ENCODE measurements at regions of chr13 and their contacts with region 1.

Region 1: GRCh38 chr13:32586080-32586900 is at the start of gene PDS5B:
- DNase-seq: peak; percentile 95
- ATAC-seq: peak; percentile 95
- H3K4me3 Mint-ChIP-seq: peak within 1 kb of the TSS; percentile 92
- H3K27ac Mint-ChIP-seq: peak within 1 kb of the TSS; percentile 91
- H3K4me1 Mint-ChIP-seq: peaks cover 35% of the 10 kb centered on the region
- H3K27me3 Mint-ChIP-seq: peaks cover 6% of the 10 kb centered on the region
- total RNA-seq, gene PDS5B: 62.5 to 72.3 TPM

Region 2: DNA sequence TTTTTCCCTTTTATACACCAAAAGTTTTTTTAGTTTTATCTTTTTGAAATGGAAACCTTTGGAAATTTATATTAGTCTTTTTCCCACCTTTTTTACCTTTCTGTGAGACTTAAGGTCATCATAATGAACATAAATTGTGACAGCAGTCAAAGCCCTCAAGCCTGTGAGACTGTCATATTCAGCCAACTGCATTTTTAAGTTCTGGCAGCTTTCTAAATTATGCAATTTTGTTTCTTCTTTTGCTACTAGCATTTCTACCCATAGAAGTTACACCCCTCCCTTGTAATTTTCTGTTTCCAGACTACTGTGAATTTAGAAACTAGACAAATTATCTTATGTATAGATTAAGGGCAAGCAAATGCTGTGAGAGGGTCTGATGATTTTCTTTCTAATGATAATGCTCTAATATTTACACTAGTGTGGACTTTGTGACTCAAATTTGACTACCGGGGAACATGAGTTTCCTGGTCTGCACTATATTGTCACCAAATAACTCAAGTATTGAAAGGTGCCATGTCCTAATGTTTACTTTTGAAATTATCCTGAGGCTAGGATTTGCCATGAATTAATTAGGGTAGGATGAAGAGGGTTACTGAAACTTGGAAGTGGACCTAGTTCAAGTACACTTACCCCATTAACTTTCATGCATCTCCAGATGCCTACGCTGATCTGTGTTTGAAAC is 511.0 kb before region 1 on chr13:
- CTCF ChIA-PET with region 1: no interaction called
- POLR2A ChIA-PET with region 1: no interaction called
- DNase-seq: no peak
- ATAC-seq: no peak
- H3K4me3 Mint-ChIP-seq: no peak overlapping the region
- H3K27ac Mint-ChIP-seq: no peak overlapping the region
- H3K4me1 Mint-ChIP-seq: no peaks in the 10 kb centered on the region
- H3K27me3 Mint-ChIP-seq: no peaks in the 10 kb centered on the region

Region 3: GRCh38 chr13:32632343-32632909 is 46.1 kb after region 1 on chr13:
- CTCF ChIA-PET with region 1: interaction called, 17 read pairs
- POLR2A ChIA-PET with region 1: interaction called, 3 read pairs
- DNase-seq: no peak
- ATAC-seq: no peak
- H3K4me3 Mint-ChIP-seq: no peak overlapping the region
- H3K27ac Mint-ChIP-seq: no peak overlapping the region
- H3K4me1 Mint-ChIP-seq: peaks cover 17% of the 10 kb centered on the region
- H3K27me3 Mint-ChIP-seq: no peaks in the 10 kb centered on the region

Region 4: DNA sequence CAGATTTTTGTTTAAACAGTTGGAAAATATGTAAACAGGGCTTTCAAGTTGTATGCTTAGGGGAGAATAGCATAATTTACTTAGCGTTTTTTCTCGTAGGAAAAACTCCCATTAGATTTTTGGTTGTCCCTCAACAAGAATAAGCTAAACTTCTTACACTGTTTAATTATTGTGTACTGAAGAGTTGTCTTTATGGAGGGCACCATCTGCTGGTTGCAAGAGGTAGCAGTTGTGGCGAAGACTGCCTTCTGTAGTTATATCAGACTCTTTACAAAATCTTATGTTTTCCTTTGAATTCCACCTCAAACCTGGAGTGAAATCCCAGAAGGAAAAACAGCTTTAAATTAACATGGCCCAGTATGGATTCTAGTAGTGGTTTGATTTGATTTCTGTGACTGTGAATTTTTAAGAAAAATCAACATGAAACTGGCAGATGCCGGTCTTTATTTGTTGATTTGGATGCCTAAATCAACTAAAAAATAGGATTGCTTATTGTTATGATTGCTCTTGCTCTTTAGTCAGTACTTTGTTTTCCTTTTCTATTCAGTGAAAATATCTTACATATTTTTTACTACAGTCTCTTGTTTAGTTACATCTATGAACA is 53.3 kb after region 1 on chr13:
- CTCF ChIA-PET with region 1: interaction called, 54 read pairs
- POLR2A ChIA-PET with region 1: interaction called, 7 read pairs
- DNase-seq: peak; percentile 68
- ATAC-seq: peak; percentile 67
- H3K4me3 Mint-ChIP-seq: no peak overlapping the region
- H3K27ac Mint-ChIP-seq: no peak overlapping the region
- H3K4me1 Mint-ChIP-seq: peaks cover 27% of the 10 kb centered on the region
- H3K27me3 Mint-ChIP-seq: no peaks in the 10 kb centered on the region

Region 5: GRCh38 chr13:32650705-32651311 is 64.5 kb after region 1 on chr13:
- CTCF ChIA-PET with region 1: interaction called, 65 read pairs
- POLR2A ChIA-PET with region 1: interaction called, 5 read pairs
- DNase-seq: peak; percentile 72
- ATAC-seq: peak; percentile 80
- H3K4me3 Mint-ChIP-seq: no peak overlapping the region
- H3K27ac Mint-ChIP-seq: no peak overlapping the region
- H3K4me1 Mint-ChIP-seq: peaks cover 24% of the 10 kb centered on the region
- H3K27me3 Mint-ChIP-seq: no peaks in the 10 kb centered on the region

Region 6: DNA sequence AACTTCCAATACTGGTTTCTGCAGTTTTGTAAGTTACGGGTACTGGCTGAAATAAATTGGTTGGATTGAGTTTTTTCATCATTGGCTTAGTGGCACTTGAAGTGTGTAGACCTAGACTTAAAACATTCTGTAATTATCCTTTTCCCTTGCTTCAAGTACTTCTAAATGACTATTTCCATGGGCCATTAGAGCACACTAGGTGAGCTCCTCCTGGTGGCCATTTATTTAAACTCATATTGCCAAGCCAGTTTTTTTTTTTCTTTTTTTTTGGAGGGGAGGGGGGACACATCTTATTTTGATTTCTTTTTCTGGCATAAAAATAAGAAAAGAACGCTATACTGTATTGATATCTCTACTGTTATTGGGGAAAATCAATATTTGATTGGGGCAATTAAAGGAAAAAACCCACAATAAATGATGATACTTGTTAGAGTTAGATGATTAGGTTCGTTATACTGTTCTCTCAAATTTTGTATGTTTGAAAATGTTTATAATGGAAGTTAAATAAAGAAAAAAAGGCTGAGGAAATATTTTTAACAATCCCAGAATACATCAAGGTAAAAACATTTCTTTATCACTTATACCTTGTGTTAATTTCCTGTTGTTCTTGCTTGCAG is 82.8 kb after region 1 on chr13:
- CTCF ChIA-PET with region 1: interaction called, 28 read pairs
- POLR2A ChIA-PET with region 1: no interaction called
- DNase-seq: peak; percentile 26
- ATAC-seq: peak; percentile 44
- H3K4me3 Mint-ChIP-seq: no peak overlapping the region
- H3K27ac Mint-ChIP-seq: no peak overlapping the region
- H3K4me1 Mint-ChIP-seq: no peaks in the 10 kb centered on the region
- H3K27me3 Mint-ChIP-seq: no peaks in the 10 kb centered on the region

Region 7: DNA sequence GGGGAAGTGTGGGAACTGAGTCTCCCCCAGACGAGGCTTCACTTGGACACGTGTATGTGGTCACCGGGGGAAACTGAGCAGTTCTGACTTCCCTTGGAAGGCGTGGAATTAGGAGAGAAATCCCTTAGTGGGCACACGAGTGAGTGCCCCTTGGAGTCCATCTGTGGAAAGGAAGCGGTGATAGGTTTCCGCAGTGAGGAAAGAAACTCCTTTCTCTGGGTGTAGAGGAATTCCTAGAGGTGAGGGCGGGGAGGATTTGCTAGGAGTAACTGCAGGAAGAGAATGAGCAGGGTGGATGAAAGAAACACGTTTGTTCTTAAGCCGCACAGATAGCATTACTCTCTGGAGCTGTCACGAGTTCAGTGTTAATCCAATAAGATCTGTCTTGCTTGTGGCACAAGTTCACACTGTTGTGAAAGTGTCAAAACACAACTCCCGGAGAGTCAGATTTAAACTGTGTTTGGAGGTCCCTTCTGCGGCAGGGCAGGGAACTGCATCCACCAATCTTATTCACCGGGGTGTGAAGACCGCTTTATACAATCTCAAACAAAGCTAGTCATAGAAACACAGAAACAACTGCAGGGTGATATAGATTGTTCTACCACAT is 431.1 kb after region 1 on chr13:
- CTCF ChIA-PET with region 1: interaction called, 12 read pairs
- POLR2A ChIA-PET with region 1: interaction called, 3 read pairs
- DNase-seq: peak; percentile 73
- ATAC-seq: peak; percentile 77
- H3K4me3 Mint-ChIP-seq: peak overlapping the region; percentile 62
- H3K27ac Mint-ChIP-seq: peak overlapping the region; percentile 27
- H3K4me1 Mint-ChIP-seq: peaks cover 20% of the 10 kb centered on the region
- H3K27me3 Mint-ChIP-seq: peaks cover 60% of the 10 kb centered on the region